CD8-positive, alpha-beta T cell (primary cell): ENCODE measurements at regions of chr4 and their contacts with region 1.

Region 1: DNA sequence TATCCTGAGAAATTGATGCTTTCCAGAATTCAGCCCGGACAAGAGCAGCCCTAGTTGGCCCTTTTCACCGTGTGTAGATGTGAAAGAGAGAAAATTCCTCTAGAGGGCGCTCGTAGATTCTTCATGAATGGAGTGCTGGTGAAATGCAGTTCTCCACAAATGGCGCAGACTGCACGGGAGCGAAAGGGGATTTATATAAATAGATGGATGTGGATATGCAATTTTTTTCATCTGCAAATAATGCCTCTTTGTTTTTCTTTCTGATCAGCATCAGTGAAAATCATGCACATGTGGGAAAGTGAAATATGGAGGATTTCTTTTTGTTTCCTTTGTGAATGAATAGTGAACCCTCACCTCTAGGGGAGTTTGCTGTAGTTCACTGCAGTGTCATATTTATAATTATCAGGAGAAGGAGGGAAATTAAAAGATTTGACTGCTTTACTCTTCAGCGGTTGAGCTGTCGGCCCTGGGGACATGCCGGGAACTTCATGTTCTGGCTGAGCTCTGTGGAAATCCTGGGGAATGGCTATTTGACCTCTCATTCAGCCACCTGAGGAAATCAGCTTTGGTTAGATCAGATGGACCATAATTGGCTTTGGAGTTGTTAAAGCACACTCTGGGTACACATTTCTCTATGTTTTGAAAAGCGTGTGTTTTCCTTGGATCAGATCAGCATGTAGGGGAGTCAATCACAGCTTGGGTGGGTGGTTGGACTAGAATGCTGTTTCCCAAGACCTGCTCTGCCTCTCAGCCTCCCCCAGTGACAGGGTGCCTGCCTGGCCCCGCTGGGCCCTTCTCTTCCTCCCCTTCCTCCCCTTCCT is 115.0 kb upstream of the SHISA3 start:
- DNase-seq: peak in 4 of 9 experiments; percentile 3 to 60 (median 29)
- ATAC-seq: no peak
- H3K4me3 ChIP-seq: no peak overlapping the region
- H3K4me3 Mint-ChIP-seq: peak overlapping the region; percentile 1
- H3K27ac ChIP-seq: no peak overlapping the region
- H3K27ac Mint-ChIP-seq: no peak overlapping the region
- H3K4me1 ChIP-seq: no peaks in the 10 kb centered on the region
- H3K4me1 Mint-ChIP-seq: peaks cover 8% of the 10 kb centered on the region
- H3K27me3 ChIP-seq: peaks cover 0 to 3% of the 10 kb centered on the region in 2 experiments
- H3K27me3 Mint-ChIP-seq: peaks cover 16% of the 10 kb centered on the region
- CTCF ChIP-seq: peak; percentile 60

Region 2: GRCh38 chr4:42519803-42520417 is 237.6 kb after region 1 on chr4:
- CTCF ChIA-PET with region 1: interaction called, 6 read pairs
- POLR2A ChIA-PET with region 1: no interaction called
- intact Hi-C with region 1: loop called in 1 of 2 experiments (anchors 10 kb)
- DNase-seq: peak in 6 of 9 experiments; percentile 5 to 63 (median 46)
- ATAC-seq: peak; percentile 73
- H3K4me3 ChIP-seq: no peak overlapping the region
- H3K4me3 Mint-ChIP-seq: no peak overlapping the region
- H3K27ac ChIP-seq: no peak overlapping the region
- H3K27ac Mint-ChIP-seq: no peak overlapping the region
- H3K4me1 ChIP-seq: no peaks in the 10 kb centered on the region
- H3K4me1 Mint-ChIP-seq: peaks cover 3% of the 10 kb centered on the region
- H3K27me3 ChIP-seq: no peaks in the 10 kb centered on the region
- H3K27me3 Mint-ChIP-seq: no peaks in the 10 kb centered on the region
- CTCF ChIP-seq: peak; percentile 82

Region 3: GRCh38 chr4:42865572-42866189 is 583.4 kb after region 1 on chr4:
- CTCF ChIA-PET with region 1: no interaction called
- POLR2A ChIA-PET with region 1: no interaction called
- intact Hi-C with region 1: loop called (anchors 5 kb)
- DNase-seq: peak; percentile 6 to 65 (median 47)
- ATAC-seq: peak; percentile 44
- H3K4me3 ChIP-seq: no peak overlapping the region
- H3K4me3 Mint-ChIP-seq: no peak overlapping the region
- H3K27ac ChIP-seq: no peak overlapping the region
- H3K27ac Mint-ChIP-seq: no peak overlapping the region
- H3K4me1 ChIP-seq: no peaks in the 10 kb centered on the region
- H3K4me1 Mint-ChIP-seq: no peaks in the 10 kb centered on the region
- H3K27me3 ChIP-seq: no peaks in the 10 kb centered on the region
- H3K27me3 Mint-ChIP-seq: peaks cover 31% of the 10 kb centered on the region
- CTCF ChIP-seq: peak; percentile 76

Region 4: DNA sequence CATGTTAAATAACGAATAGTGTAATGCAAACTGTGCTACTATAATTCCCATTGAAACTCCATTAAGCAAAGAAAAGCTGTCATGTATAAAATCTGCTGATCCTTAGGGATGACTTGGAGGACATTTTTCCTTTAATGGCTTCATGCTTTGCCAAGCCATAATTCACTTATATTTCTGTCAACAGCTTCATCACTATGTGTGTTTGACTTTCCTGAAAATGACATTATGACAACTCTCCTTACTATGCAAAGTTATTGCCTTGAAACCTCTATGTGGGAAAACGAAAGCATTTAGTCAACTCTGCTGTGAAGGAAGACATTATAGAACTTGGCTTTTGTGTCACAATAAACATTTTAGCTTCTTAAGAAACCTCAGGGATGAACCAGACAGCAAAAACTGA is 820.8 kb after region 1 on chr4:
- CTCF ChIA-PET with region 1: no interaction called
- POLR2A ChIA-PET with region 1: no interaction called
- intact Hi-C with region 1: no loop called
- DNase-seq: no peak
- ATAC-seq: no peak
- H3K4me3 ChIP-seq: no peak overlapping the region
- H3K4me3 Mint-ChIP-seq: no peak overlapping the region
- H3K27ac ChIP-seq: no peak overlapping the region
- H3K27ac Mint-ChIP-seq: no peak overlapping the region
- H3K4me1 ChIP-seq: no peaks in the 10 kb centered on the region
- H3K4me1 Mint-ChIP-seq: no peaks in the 10 kb centered on the region
- H3K27me3 ChIP-seq: no peaks in the 10 kb centered on the region
- H3K27me3 Mint-ChIP-seq: no peaks in the 10 kb centered on the region
- CTCF ChIP-seq: no peak